Activated B cell treated with CpG ODN at 0.5 μM for 24 hours (primary cell): ENCODE measurements at regions of chr6 and their contacts with region 1.

Region 1: GRCh38 chr6:156564127-156564806 is 212.9 kb upstream of the ARID1B start:
- DNase-seq: peak; percentile 78
- ATAC-seq: peak; percentile 100
- H3K4me3 Mint-ChIP-seq: no peak overlapping the region
- H3K27ac Mint-ChIP-seq: no peak overlapping the region
- H3K4me1 Mint-ChIP-seq: peaks cover 10% of the 10 kb centered on the region
- H3K27me3 Mint-ChIP-seq: peaks cover 5% of the 10 kb centered on the region
- CTCF ChIP-seq: peak; percentile 76

Region 2: GRCh38 chr6:156832231-156832647 is 268.0 kb after region 1 on chr6:
- CTCF ChIA-PET with region 1: no interaction called
- POLR2A ChIA-PET with region 1: no interaction called
- intact Hi-C with region 1: loop called (anchors 5 kb)
- DNase-seq: no peak
- ATAC-seq: no peak
- H3K4me3 Mint-ChIP-seq: no peak overlapping the region
- H3K27ac Mint-ChIP-seq: peak overlapping the region; percentile 24
- H3K4me1 Mint-ChIP-seq: peaks cover 54% of the 10 kb centered on the region
- H3K27me3 Mint-ChIP-seq: no peaks in the 10 kb centered on the region
- CTCF ChIP-seq: no peak

Region 3: GRCh38 chr6:156933201-156934068 is 369.2 kb after region 1 on chr6:
- CTCF ChIA-PET with region 1: interaction called, 4 read pairs
- POLR2A ChIA-PET with region 1: no interaction called
- intact Hi-C with region 1: loop called (anchors 1 kb)
- DNase-seq: no peak
- ATAC-seq: no peak
- H3K4me3 Mint-ChIP-seq: no peak overlapping the region
- H3K27ac Mint-ChIP-seq: no peak overlapping the region
- H3K4me1 Mint-ChIP-seq: peaks cover 66% of the 10 kb centered on the region
- H3K27me3 Mint-ChIP-seq: no peaks in the 10 kb centered on the region
- CTCF ChIP-seq: no peak

Region 4: GRCh38 chr6:157184202-157185020 is 620.1 kb after region 1 on chr6:
- CTCF ChIA-PET with region 1: no interaction called
- POLR2A ChIA-PET with region 1: no interaction called
- intact Hi-C with region 1: loop called (anchors 1 kb)
- DNase-seq: peak; percentile 30
- ATAC-seq: peak; percentile 75
- H3K4me3 Mint-ChIP-seq: no peak overlapping the region
- H3K27ac Mint-ChIP-seq: no peak overlapping the region
- H3K4me1 Mint-ChIP-seq: peaks cover 3% of the 10 kb centered on the region
- H3K27me3 Mint-ChIP-seq: no peaks in the 10 kb centered on the region
- CTCF ChIP-seq: no peak

Region 5: GRCh38 chr6:157274471-157275226 is 710.4 kb after region 1 on chr6:
- CTCF ChIA-PET with region 1: no interaction called
- POLR2A ChIA-PET with region 1: interaction called, 3 read pairs
- intact Hi-C with region 1: loop called (anchors 2 kb)
- DNase-seq: peak; percentile 93
- ATAC-seq: peak; percentile 79
- H3K4me3 Mint-ChIP-seq: peak overlapping the region; percentile 94
- H3K27ac Mint-ChIP-seq: peak overlapping the region; percentile 96
- H3K4me1 Mint-ChIP-seq: peaks cover 9% of the 10 kb centered on the region
- H3K27me3 Mint-ChIP-seq: no peaks in the 10 kb centered on the region
- CTCF ChIP-seq: no peak